GM18951 (cell line): ENCODE measurements at regions of chr11 and their contacts with region 1.

Region 1: GRCh38 chr11:66694732-66695207 is 17.1 kb upstream of the RBM4B start:
- POLR2A ChIP-seq: no peak

Region 2: DNA sequence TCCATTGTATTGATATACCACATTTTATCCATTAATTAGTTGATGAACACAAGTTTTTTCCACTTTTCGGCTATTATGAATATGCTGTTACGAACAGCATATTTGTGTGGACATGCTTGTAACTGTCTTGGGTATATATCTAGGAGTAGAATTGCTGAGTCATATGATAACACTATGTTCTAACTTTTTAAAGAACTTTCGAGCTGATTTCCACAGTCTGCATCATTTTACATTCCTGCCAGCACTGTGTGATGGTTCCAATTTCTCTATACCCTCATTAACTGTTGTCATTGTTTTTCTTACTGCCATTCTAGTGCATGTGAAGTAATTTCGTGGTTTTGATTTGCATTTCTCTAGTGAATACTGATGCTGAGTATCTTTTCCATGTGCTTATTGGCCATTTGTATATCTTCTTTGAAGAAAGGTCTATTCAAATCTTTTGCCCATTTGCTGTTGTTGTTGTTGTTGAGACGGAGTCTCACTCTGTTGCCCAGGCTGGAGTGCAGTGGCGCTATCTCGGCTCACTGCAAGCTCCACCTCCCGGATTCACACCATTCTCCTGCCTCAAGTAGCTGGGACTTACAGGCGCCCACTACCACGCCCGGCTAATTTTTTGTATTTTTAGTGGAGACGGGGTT is 141.1 kb after region 1 on chr11:
- in situ Hi-C with region 1: loop called (anchors 10 kb)
- POLR2A ChIP-seq: no peak